Activated T-helper 1 cell treated with anti-CD3 and anti-CD28 coated beads, Interleukin-12 subunit alpha, Interleukin-12 subunit beta, Interleukin-2, Interleukin-4 antibody, amounts not matched to agents 30 ng/mL and 10 ng/mL and 1 ng/mL, durations not matched to agents 14 hours and 24 hours and 36 hours (primary cell): ENCODE measurements at regions of chr6 and their contacts with region 1.

Region 1: DNA sequence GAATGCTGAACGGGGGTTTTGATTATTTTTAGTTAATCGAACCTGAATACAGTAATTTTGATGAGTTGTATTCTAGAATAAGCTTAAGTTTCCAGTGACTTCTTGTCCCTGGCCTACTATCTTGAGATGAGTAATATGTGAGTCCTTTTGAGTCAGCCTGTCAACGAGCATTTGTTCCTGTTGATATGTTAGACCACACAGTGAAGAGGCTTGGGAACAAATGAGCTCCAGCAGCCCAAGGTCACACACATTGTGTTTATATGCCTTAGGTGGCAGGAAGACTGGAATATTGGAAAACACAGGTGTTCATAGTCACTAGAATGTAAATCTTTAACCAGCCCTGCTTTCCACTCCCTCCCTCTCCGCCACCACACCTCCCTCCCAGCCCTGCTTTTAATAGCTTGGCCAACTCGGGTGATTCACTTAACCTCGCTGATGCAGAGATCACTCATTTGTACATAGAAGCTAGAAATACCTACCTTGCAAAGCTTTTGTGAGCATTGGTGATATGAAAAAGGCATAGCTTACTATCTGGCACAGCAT is 9.1 kb downstream of the SMPDL3A start:
- DNase-seq: no peak
- H3K4me3 Mint-ChIP-seq: no peak overlapping the region
- H3K27ac Mint-ChIP-seq: peak overlapping the region; percentile 67
- H3K4me1 Mint-ChIP-seq: peaks cover 7% of the 10 kb centered on the region
- H3K27me3 Mint-ChIP-seq: peaks cover 4% of the 10 kb centered on the region

Region 2: DNA sequence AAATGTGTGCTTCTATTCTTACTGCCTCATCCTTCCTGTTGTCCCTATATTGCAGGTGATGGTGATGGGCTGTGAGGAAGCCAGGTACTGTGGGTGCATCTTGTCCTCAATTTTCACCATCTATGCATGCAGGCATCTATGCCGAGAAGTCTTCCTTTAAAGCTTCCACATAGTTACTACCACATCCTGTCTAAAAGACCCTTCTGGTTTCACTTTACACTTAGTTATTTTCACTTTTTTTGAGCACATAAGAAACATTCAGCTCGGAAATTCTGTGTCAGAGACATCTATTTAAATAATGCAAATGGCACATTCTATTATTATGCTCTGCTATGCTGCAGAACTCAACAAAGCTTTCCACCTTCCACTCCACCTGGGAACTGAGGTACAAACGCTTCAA is 46.8 kb before region 1 on chr6:
- intact Hi-C with region 1: loop called (anchors 2 kb)
- DNase-seq: no peak
- H3K4me3 Mint-ChIP-seq: peak overlapping the region; percentile 61
- H3K27ac Mint-ChIP-seq: peak overlapping the region; percentile 74
- H3K4me1 Mint-ChIP-seq: peaks cover 26% of the 10 kb centered on the region
- H3K27me3 Mint-ChIP-seq: no peaks in the 10 kb centered on the region

Region 3: GRCh38 chr6:122839477-122839876 is 41.3 kb after region 1 on chr6:
- intact Hi-C with region 1: loop called (anchors 2 kb)
- DNase-seq: peak; percentile 31
- H3K4me3 Mint-ChIP-seq: no peak overlapping the region
- H3K27ac Mint-ChIP-seq: no peak overlapping the region
- H3K4me1 Mint-ChIP-seq: no peaks in the 10 kb centered on the region
- H3K27me3 Mint-ChIP-seq: peaks cover 7% of the 10 kb centered on the region